Dorsolateral prefrontal cortex (tissue), 120 donors: ENCODE measurements at regions of chr17 and their contacts with region 1.

Region 1: DNA sequence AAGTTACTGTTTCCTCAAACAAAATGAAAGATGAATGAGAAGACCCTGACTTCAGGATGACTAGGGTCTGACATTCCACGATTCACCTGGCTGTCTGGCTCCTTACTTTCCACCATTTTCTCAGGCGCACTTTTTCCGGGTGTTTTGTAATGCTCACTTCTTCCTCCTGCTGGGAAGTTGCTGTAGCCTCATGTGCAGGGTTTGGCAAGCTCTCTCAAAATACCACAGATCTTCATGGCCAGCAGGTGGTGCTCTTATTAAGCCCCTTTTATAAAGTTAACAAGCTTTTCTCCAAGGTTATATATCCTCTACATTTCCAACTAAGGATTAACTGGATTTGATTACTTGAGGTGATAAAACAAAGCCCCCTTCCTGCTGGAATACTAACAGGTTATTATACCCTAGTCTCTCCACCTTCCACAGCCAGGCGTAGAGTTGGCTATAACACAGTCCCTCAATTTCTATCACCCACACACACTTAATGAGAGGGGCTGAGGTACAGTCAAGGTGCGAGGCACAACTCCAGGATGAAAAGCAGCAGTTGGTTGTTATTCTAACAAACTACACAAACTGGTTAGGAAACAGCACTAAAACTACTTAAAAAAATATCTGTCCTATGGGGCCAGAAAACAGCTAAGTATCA is 45.4 kb downstream of the STH start:
- DNase-seq: peak in 6 of 10 donors; percentile 59 to 86 (median 61)
- H3K4me3 ChIP-seq: peak overlapping the region in 5 of 59 donors; percentile 1 to 12 (median 8)
- H3K27ac ChIP-seq: peak overlapping the region in 46 of 59 donors; percentile 1 to 81 (median 49)
- H3K27me3 ChIP-seq: no peaks in the 10 kb centered on the region
- CTCF ChIP-seq: peak; percentile 57 to 96 (median 88)

Region 2: DNA sequence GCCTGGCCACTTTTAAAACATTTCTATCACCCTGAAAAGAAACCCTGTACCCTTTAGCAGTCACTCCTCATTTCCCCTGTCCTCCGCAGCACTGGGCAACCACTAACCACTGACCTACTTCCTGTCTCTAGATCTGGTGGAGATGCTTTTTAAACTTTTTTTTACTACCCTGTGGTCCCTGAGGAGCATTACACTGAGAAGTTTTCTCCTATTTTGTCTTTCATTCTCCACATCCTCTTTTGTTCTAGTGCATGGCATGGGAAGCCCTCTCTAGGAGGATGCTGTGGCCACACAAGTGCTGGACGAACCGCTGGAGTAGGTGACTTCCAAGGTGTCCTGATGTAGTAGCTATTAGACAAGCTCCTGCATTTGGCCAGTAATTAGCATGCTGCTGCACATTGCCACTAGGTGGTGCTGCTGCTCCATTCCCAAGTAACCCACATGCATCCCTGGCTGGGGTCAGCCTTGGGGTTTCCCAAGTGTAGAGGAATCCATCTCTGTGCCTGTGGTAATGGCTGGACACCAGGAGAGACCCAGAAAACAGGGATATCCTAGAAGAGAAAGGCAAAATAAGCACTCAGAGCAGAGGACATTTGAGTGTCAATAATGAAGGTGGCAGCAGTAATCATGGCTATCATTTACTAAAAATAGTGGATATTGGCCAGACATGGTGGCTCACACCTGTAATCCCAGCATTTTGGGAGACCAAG is 404.1 kb before region 1 on chr17:
- intact Hi-C with region 1: loop called in 1 of 2 experiments (anchors 10 kb)
- DNase-seq: peak; percentile 73 to 86 (median 80)
- H3K4me3 ChIP-seq: no peak overlapping the region
- H3K27ac ChIP-seq: peak overlapping the region in 3 of 59 donors; percentile 5 to 44 (median 35)
- H3K27me3 ChIP-seq: no peaks in the 10 kb centered on the region
- CTCF ChIP-seq: peak; percentile 85 to 98 (median 95)

Region 3: DNA sequence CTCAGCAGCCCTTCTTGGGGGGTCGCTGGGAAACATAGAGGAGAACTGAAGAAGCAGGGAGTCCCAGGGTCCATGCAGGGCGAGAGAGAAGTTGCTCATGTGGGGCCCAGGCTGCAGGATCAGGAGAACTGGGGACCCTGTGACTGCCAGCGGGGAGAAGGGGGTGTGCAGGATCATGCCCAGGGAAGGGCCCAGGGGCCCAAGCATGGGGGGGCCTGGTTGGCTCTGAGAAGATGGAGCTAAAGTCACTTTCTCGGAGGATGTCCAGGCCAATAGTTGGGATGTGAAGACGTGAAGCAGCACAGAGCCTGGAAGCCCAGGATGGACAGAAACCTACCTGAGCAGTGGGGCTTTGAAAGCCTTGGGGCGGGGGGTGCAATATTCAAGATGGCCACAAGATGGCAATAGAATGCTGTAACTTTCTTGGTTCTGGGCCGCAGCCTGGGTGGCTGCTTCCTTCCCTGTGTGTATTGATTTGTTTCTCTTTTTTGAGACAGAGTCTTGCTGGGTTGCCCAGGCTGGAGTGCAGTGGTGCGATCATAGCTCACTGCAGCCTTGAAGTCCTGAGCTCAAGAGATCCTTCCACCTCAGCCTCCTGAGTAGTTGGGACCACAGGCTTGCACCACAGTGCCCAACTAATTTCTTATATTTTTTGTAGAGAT is 42.0 kb before region 1 on chr17:
- intact Hi-C with region 1: loop called (anchors 5 kb)
- DNase-seq: peak in 9 of 10 donors; percentile 49 to 85 (median 71)
- H3K4me3 ChIP-seq: peak overlapping the region in 1 of 59 donors; percentile 1
- H3K27ac ChIP-seq: peak overlapping the region in 53 of 59 donors; percentile 2 to 90 (median 69)
- H3K27me3 ChIP-seq: no peaks in the 10 kb centered on the region
- CTCF ChIP-seq: peak; percentile 92 to 100 (median 97)

Region 4: DNA sequence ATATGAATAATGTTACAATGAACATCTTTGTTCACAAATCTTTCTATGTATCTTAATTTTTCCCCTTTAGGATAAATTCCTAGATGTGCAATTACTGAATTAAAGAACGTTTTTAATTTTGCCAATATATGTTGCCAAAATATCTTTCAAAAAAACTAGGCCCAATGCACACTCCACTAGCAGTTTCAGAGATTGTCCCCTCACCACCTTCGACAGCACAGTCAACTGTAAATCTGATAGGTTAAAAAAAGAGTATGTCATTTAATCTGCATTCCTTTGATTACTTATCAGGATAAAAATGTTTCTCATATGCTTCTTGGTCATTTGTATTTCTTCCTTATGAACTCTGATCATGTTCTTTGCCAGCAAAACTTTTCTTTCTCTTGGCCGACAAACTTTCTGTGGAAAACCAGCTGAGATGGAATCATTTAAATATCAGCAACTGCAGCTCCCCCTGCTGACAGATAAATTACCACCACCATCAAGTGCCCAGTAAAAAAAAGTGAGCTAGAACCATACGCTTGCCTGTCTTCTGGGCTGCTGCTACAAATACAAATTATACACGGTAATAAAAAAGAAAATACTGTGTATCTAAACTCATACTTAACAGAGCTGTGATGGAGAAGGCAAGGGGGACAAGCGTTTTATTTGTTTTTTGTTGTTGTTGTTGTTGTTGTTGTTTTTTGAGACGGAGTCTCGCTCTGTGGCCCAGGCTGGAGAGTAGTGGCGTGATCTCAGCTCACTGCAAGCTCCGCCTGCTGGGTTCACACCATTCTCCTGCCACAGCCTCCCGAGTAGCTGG is 168.4 kb after region 1 on chr17:
- intact Hi-C with region 1: loop called in 1 of 2 experiments (anchors 5 kb)
- DNase-seq: peak in 4 of 10 donors; percentile 56 to 84 (median 66)
- H3K4me3 ChIP-seq: peak overlapping the region in 2 of 59 donors; percentile 5 to 7
- H3K27ac ChIP-seq: peak overlapping the region in 16 of 59 donors; percentile 0 to 57 (median 22)
- H3K27me3 ChIP-seq: no peaks in the 10 kb centered on the region
- CTCF ChIP-seq: peak in 55 of 56 donors; percentile 63 to 99 (median 90)

Region 5: GRCh38 chr17:46270032-46270431 is 225.6 kb after region 1 on chr17:
- intact Hi-C with region 1: no loop called
- DNase-seq: no peak
- H3K4me3 ChIP-seq: no peak overlapping the region
- H3K27ac ChIP-seq: no peak overlapping the region
- H3K27me3 ChIP-seq: no peaks in the 10 kb centered on the region
- CTCF ChIP-seq: no peak